GM12878 (cell line): ENCODE measurements at regions of chr9 and their contacts with region 1.

Region 1: GRCh38 chr9:137277329-137278041 is at the start of gene TOR4A:
- DNase-seq: peak; percentile 42
- ATAC-seq: peak; percentile 89
- H3K4me3 ChIP-seq: peak within 1 kb of the TSS; percentile 92
- H3K27ac ChIP-seq: peak within 1 kb of the TSS; percentile 95
- H3K4me1 ChIP-seq: peaks cover 39% of the 10 kb centered on the region
- H3K27me3 ChIP-seq: no peaks in the 10 kb centered on the region
- CTCF ChIP-seq: peak; percentile 26 to 34 (median 28); a peak in 4 of 6 replicates
- EP300 ChIP-seq: no peak
- POLR2A ChIP-seq: no peak
- RAD21 ChIP-seq: 0 out of 2 replicates have a peak, but pooled peaks have one; percentile 1
- polyA plus RNA-seq, gene TOR4A: 2.2 to 3.4 TPM

Region 2: GRCh38 chr9:136742591-136743391 is 534.7 kb before region 1 on chr9 and contains the start of gene LCN10:
- CTCF ChIA-PET with region 1: no interaction called
- POLR2A ChIA-PET with region 1: no interaction called
- RAD21 ChIA-PET with region 1: no interaction called
- SMC1A ChIA-PET with region 1: no interaction called
- in situ Hi-C with region 1: no loop called
- intact Hi-C with region 1: no loop called
- DNase-seq: no peak
- ATAC-seq: peak; percentile 51
- H3K4me3 ChIP-seq: peak within 1 kb of the TSS; percentile 33; the same call in 1 of the 2 replicates
- H3K27ac ChIP-seq: no peak within 1 kb of the TSS
- H3K4me1 ChIP-seq: peaks cover 15% of the 10 kb centered on the region
- H3K27me3 ChIP-seq: peaks cover 0 to 8% of the 10 kb centered on the region in 2 experiments; a peak in 3 of 4 replicates
- CTCF ChIP-seq: peak in 1 of 3 experiments; percentile 21; a peak in 1 of 6 replicates
- EP300 ChIP-seq: no peak
- POLR2A ChIP-seq: no peak
- RAD21 ChIP-seq: no peak
- polyA plus RNA-seq, gene LCN10: 0.11 TPM in 1 of 2 experiments, not detected in the other

Region 3: GRCh38 chr9:137123468-137123837 is 154.0 kb before region 1 on chr9:
- CTCF ChIA-PET with region 1: no interaction called
- POLR2A ChIA-PET with region 1: interaction called, 11 read pairs
- RAD21 ChIA-PET with region 1: no interaction called
- SMC1A ChIA-PET with region 1: no interaction called
- in situ Hi-C with region 1: no loop called
- intact Hi-C with region 1: no loop called
- DNase-seq: peak; percentile 91
- ATAC-seq: peak; percentile 30
- H3K4me3 ChIP-seq: 0 out of 2 replicates have a peak overlapping the region, but pooled peaks have one; percentile 3
- H3K27ac ChIP-seq: peak overlapping the region; percentile 47
- H3K4me1 ChIP-seq: peaks cover 42% of the 10 kb centered on the region
- H3K27me3 ChIP-seq: no peaks in the 10 kb centered on the region
- CTCF ChIP-seq: no peak
- EP300 ChIP-seq: no peak
- POLR2A ChIP-seq: no peak
- RAD21 ChIP-seq: no peak

Region 4: DNA sequence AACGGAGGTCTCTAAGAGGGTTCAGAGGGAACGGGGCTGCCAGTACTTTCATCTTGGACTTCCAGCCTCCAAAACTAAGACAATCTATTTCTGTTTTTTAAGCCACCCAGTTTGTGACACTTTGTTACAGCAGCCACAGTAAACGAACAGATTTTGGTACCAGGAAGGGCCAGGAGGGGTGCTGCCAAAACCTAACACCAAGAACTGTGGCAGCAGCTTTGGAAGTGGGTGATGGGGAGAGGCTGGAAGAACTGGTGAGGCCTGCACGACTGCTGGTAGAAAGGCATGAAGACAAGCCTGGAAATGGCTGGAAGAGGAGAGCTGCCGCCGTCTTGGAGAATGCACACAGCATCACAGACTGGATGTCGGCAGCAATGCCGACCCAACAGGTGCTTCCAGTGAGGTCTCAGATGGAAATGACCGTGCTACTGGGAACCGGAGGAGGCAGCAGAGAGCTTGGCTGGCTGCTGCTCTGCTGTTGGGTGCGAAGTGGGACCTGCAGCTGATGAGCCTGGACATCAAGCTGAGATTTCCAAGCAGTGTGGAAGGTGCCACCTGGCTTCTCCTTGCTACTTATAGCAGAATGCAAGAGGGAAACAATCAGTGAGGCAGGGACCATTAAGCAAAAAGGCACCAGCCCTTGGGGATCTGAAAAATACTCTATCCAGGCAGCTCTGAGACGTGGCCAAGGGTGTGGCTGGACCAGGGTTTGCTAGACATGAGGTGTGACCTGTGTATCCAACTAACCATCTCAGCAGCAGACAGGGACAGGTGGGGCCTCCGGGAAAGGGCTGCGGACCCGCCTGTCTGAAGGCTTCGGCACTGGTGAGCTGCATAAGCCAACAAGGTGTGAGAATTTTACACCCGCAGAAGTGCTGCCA is 100.9 kb before region 1 on chr9:
- CTCF ChIA-PET with region 1: no interaction called
- POLR2A ChIA-PET with region 1: no interaction called
- RAD21 ChIA-PET with region 1: no interaction called
- SMC1A ChIA-PET with region 1: no interaction called
- in situ Hi-C with region 1: no loop called
- intact Hi-C with region 1: no loop called
- DNase-seq: no peak
- ATAC-seq: peak; percentile 80
- H3K4me3 ChIP-seq: no peak overlapping the region
- H3K27ac ChIP-seq: no peak overlapping the region
- H3K4me1 ChIP-seq: no peaks in the 10 kb centered on the region
- H3K27me3 ChIP-seq: no peaks in the 10 kb centered on the region
- CTCF ChIP-seq: peak; percentile 57 to 64 (median 59); a peak in 5 of 6 replicates
- EP300 ChIP-seq: no peak
- POLR2A ChIP-seq: 0 out of 2 replicates have a peak, but pooled peaks have one; percentile 5
- RAD21 ChIP-seq: peak; percentile 37; the same call in 1 of the 2 replicates